Ovary (tissue), 10 donors: ENCODE measurements at regions of chr12 and their contacts with region 1.

Region 1: DNA sequence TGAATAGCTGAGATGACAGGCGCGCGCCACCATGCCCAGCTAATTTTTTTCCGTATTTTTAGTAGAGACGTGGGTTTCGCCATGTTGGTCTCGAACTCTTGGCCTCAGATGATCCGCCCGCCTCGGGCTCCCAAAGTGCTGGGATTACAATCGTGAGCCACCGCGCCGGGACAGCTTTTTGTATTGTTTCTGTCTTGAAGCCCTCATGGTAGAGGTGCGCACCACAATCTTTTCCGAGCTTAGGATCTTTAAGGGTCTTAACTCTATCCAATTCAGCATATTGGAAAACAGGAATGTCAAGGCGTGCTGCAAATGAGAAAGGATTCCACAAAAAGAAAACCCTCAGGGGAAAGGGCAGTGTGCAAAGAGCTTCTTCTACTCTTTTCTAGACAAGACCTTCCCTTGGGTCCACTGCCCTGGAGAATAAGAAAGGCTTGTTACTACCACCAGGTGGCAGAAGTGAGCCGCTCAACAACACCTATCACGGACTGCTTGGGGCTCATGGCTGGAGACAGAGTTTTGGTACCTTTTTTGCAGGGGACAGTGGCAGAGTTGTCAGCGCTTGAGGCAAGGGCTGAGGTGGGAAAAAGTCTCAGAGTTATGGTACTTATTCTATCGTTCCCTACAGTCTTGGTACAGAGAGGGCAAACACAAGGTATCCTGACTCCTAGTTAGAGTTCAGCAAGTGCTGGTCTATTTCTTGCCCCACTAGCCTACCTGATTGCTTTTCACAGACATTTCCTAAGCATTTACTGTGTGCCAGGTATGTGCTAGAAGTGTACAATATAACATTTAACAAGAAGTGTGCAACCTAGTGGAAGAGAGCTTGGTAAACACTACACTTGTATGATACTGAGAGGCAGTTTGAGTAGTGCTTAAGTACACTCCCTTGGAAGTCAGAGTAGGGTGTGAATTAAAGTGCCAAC is 16.4 kb upstream of the SP7 start:
- DNase-seq: peak; percentile 76 to 90 (median 81)
- H3K4me3 ChIP-seq: no peak overlapping the region
- H3K27ac ChIP-seq: no peak overlapping the region
- H3K4me1 ChIP-seq: no peaks in the 10 kb centered on the region
- H3K27me3 ChIP-seq: no peaks in the 10 kb centered on the region
- CTCF ChIP-seq: peak; percentile 83 to 93 (median 92)
- EP300 ChIP-seq: no peak
- POLR2A ChIP-seq: no peak

Region 2: GRCh38 chr12:53419761-53420160 is 67.2 kb after region 1 on chr12:
- intact Hi-C with region 1: loop called (anchors 1 to 5 kb)
- DNase-seq: no peak
- H3K4me3 ChIP-seq: no peak overlapping the region
- H3K27ac ChIP-seq: no peak overlapping the region
- H3K4me1 ChIP-seq: peaks cover 13% of the 10 kb centered on the region
- H3K27me3 ChIP-seq: no peaks in the 10 kb centered on the region
- CTCF ChIP-seq: no peak
- EP300 ChIP-seq: no peak
- POLR2A ChIP-seq: no peak

Region 3: DNA sequence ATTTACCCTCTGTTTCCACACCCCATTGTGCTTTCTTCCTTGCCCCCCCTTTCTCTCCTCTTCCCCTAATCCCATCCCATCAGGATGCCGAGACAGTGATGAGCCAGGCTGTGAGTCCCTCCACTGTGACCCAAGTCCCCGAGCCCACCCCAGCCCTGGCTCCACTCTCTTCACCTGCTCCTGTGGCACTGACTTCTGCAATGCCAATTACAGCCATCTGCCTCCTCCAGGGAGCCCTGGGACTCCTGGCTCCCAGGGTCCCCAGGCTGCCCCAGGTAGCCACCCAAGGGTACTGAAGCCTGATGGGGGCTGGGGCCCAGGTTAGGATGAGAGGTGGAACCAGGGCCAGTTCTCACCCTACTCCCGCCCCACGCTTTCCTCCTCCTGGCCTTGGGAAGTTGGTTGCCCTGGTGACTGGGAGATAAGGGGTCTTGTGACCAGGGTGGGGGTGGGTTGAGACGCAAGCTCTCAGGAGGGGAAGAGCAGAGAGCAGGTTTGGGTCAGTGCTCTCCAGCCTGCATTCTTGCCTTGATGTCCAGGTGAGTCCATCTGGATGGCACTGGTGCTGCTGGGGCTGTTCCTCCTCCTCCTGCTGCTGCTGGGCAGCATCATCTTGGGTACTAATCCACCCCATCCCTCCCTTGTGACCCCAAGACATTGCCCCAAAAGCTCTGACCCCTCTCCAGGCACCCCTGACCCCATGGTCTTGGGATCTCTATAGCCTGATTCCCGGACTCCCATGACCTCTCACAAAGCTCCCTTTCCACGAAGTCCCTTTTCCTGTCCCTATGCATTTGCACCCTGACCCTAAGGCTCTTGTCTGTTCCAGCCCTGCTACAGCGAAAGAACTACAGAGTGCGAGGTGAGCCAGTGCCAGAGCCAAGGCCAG is 72.3 kb after region 1 on chr12:
- intact Hi-C with region 1: loop called (anchors 1 to 5 kb)
- DNase-seq: peak; percentile 80 to 87 (median 83)
- H3K4me3 ChIP-seq: peak overlapping the region; percentile 1
- H3K27ac ChIP-seq: peak overlapping the region; percentile 64 to 85
- H3K4me1 ChIP-seq: peaks cover 21% of the 10 kb centered on the region
- H3K27me3 ChIP-seq: no peaks in the 10 kb centered on the region
- CTCF ChIP-seq: no peak
- EP300 ChIP-seq: no peak
- POLR2A ChIP-seq: peak; percentile 35

Region 4: DNA sequence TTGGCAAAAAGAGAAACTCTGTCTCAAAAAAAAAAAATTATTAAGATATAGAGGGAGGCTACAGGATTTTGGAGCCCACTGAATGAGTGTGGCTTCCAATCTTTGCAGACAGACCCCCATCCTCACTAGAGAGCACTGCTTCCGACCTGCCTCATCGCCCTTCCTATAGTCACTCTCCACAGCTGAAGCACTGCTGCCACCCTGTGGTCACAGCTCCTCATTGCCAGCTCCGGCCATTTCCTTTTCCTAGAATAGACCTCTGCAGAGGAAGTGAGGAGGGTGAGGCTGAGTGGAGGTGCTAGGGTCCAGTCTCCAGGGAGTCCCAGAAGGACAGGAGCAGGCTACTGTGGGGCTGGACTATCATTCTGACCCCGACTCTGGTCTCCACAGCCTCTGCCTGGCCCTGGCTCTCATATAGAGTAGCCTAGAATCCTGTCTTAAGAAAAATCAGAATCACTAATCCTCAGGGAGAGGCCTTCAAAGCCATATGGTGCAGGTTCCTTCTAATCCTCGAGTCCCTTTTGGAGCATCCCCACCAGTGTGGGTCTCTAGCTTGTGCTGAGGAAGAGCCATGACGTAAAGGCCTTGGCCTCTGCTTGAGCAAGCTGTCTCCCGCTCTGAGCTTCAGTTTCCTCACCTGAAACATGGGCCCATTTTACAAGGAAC is 156.1 kb after region 1 on chr12:
- intact Hi-C with region 1: loop called (anchors 2 to 10 kb)
- DNase-seq: peak; percentile 76 to 90 (median 87)
- H3K4me3 ChIP-seq: no peak overlapping the region
- H3K27ac ChIP-seq: peak overlapping the region in 1 of 2 donors; percentile 7
- H3K4me1 ChIP-seq: no peaks in the 10 kb centered on the region
- H3K27me3 ChIP-seq: no peaks in the 10 kb centered on the region
- CTCF ChIP-seq: peak; percentile 79 to 87 (median 83)
- EP300 ChIP-seq: no peak
- POLR2A ChIP-seq: no peak